Motor neuron (in vitro differentiated cells): ENCODE measurements at regions of chr9 and their contacts with region 1.

Region 1: GRCh38 chr9:36245906-36246305 is 12.3 kb downstream of the GNE start:
- ATAC-seq: no peak
- H3K4me3 ChIP-seq: no peak overlapping the region
- H3K27ac ChIP-seq: no peak overlapping the region
- H3K4me1 ChIP-seq: no peaks in the 10 kb centered on the region

Region 2: GRCh38 chr9:36053971-36054370 is 191.9 kb before region 1 on chr9:
- in situ Hi-C with region 1: no loop called
- ATAC-seq: no peak
- H3K4me3 ChIP-seq: no peak overlapping the region
- H3K27ac ChIP-seq: no peak overlapping the region
- H3K4me1 ChIP-seq: no peaks in the 10 kb centered on the region

Region 3: DNA sequence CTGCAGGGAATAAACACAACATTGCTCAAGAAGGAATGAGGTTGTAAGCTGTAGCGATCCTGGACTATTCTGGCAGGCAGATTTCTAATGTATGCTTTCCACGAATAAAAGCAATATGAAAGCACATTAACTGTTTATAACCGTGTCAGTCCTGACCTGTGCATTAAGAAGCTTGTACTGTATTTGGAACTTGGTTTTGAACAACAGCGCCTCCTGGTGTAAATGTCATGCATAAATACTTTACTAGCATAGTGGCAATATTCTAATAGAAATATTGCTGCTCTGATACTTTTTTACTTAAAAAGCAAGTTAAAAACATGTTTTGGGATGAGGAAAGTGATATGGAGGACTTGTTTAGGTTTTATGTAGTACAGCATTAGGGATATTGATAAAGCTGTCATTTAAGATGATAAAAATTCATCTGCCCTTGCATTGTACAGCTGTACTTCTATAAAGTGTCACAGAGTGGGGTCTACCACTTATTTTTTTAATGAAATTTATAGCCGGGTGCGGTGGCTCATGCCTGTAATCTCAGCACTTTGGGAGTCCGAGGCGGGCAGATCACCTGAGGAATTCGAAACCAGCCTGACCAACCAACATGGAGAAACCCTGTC is 83.0 kb after region 1 on chr9:
- in situ Hi-C with region 1: loop called in 1 of 9 experiments (anchors 25 kb)
- ATAC-seq: peak in 7 of 8 experiments; percentile 45 to 84 (median 67)
- H3K4me3 ChIP-seq: no peak overlapping the region
- H3K27ac ChIP-seq: no peak overlapping the region
- H3K4me1 ChIP-seq: no peaks in the 10 kb centered on the region

Region 4: DNA sequence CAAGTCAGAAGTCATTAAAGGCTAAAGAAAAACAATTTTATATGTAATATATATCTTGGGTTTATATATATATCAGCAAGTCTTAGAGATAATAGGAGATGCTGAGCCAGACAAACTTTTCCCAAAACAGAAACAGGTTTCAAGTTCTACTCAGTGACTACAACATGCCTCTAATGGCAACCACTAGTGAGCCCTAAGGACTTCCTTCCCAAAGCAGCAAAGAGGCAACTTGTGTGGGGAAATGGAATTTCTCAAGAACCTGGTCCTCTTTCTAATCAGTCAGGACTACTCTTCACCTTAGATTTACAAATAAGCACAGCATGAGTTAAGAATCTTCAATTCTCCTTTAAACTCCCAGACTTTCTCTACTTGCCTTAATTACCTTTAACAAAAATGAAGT is 136.6 kb after region 1 on chr9:
- in situ Hi-C with region 1: no loop called
- ATAC-seq: no peak
- H3K4me3 ChIP-seq: no peak overlapping the region
- H3K27ac ChIP-seq: no peak overlapping the region
- H3K4me1 ChIP-seq: no peaks in the 10 kb centered on the region

Region 5: DNA sequence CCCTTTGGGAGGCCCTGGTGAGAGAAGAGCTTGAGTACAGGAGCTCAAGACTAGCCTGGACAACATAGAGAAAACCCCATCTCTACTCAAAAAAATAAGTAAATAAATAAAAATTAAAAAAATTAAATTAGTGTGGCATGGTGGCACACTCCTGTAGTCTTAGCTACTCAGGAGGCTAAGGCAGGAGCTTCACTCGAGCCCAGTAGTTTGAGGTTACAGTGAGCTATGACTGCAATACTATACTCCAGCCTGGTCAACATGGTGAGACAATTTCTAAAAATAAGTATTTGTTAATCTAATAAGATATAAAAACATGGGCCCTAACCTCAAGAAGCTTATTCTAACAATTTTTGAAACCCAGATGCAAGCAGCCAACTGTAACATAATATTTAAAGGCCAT is 146.6 kb after region 1 on chr9:
- in situ Hi-C with region 1: no loop called
- ATAC-seq: no peak
- H3K4me3 ChIP-seq: no peak overlapping the region
- H3K27ac ChIP-seq: no peak overlapping the region
- H3K4me1 ChIP-seq: no peaks in the 10 kb centered on the region